ENCODE measurements at regions of chr2 and their contacts with region 1.

Region 1: DNA sequence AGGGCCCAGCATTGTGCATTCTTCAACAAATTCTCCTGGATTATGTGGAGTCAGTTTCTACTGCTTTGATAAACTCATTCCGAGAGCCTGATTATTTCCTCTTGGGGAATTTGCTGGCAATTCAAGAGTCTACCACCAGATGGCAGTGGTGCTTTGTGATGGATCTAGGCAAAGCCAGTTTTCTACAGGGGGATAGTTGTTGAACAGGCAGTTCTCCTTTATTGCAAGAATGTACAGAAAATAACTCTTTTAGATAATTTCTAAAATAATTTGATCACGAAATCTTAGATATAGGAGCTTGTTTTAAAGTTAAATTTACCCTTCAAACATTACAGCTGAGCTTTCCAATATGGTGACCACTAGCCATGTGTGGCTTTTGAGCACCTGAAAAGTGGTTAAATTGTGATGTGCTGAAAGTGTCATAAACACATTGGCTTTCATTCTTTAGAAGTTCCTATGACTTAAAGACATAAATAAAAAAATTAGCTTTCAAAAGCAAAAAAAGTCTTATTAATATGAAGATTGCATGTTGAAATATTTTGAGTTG is 66.7 kb upstream of the HAAO start:
- DNase-seq: no peak
- ATAC-seq: no peak

Region 2: DNA sequence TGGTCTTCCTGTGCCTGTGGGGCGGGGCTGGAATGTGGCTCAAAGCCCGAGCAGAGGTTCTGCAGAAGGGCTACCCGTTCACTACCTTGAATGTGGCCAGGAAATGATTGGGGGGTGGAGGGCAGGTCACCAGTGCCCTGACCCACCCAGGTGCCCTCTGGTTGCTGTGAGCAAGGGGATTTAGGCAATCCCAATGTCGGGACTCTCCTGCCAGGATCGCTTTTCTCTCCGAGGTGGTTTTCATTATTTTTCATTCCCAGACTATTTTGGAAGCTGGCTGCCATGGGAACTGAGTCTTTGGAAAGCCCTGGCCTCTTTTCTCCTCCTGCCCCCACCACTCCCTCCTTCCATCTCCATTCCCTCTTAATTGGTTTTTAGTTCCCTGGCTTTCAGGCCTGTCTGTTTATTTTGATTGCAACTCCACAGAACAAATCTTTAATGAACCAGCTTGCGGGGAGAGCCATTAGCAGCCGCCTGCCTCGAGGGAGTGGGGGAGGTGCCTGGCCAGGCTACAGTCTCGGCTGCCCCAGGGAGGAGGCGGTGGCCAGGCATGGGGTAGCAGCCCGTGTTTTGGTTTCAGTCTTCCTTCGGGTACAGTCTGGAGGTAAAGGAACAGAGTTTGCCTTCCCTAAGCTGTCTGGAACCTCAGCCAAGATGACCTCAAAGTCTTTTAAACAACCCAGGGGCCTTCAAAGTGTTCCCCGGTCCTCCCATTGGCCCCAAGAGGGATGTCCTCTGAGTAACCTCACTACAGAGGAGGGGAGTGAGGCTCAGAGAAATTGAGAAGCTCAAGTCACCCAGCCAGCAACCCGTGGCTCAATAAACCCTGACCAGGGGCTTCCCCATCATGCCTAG is 47.7 kb after region 1 on chr2:
- intact Hi-C with region 1: loop called (anchors 2 kb)
- DNase-seq: peak; percentile 88
- ATAC-seq: peak; percentile 67

Region 3: GRCh38 chr2:43105586-43106558 is 246.8 kb after region 1 on chr2:
- intact Hi-C with region 1: loop called (anchors 10 kb)
- DNase-seq: peak; percentile 86
- ATAC-seq: peak; percentile 56